HEK293 (cell line): ENCODE measurements at regions of chr7 and their contacts with region 1.

Region 1: DNA sequence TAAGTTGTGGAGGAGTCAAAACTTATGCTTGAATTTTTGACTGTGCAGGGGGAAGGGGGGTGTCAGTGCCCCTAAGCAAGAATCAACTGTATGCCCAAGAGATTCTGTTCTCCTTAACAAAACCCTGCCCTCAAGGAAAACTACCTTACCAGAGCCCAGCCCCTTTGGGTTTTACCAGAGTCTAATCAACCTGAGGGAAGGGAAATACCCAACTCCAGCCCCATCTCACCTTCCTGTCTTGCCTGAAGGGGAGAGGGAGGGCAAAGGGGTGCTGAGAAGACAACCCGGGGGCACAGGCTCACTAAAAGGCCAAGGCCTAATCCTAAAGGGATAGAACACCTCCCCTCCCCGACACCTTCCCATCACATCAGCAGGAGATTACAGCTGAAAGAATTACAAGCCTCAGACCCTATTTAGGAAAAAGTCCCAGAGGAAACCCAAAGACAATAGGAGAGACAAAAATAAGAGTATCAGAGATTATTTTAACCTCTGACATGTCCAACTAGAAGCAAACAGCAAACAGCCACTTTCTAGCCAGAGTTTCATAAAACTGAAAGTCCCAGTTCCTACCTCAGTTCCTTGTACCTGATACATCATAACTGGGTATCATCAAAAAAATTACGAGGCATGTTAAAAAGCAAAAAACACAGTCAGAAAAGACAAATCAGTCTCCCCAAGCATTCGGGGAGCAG is 26.8 kb upstream of the C7orf33 start:
- H3K4me3 ChIP-seq: no peak overlapping the region
- H3K27ac ChIP-seq: no peak overlapping the region
- H3K4me1 ChIP-seq: no peaks in the 10 kb centered on the region
- CTCF ChIP-seq: no peak

Region 2: GRCh38 chr7:148255333-148255732 is 308.4 kb before region 1 on chr7:
- CTCF ChIA-PET with region 1: no interaction called
- POLR2A ChIA-PET with region 1: no interaction called
- H3K4me3 ChIP-seq: no peak overlapping the region
- H3K27ac ChIP-seq: no peak overlapping the region
- H3K4me1 ChIP-seq: no peaks in the 10 kb centered on the region
- CTCF ChIP-seq: no peak; the same call in 1 of the 2 replicates

Region 3: DNA sequence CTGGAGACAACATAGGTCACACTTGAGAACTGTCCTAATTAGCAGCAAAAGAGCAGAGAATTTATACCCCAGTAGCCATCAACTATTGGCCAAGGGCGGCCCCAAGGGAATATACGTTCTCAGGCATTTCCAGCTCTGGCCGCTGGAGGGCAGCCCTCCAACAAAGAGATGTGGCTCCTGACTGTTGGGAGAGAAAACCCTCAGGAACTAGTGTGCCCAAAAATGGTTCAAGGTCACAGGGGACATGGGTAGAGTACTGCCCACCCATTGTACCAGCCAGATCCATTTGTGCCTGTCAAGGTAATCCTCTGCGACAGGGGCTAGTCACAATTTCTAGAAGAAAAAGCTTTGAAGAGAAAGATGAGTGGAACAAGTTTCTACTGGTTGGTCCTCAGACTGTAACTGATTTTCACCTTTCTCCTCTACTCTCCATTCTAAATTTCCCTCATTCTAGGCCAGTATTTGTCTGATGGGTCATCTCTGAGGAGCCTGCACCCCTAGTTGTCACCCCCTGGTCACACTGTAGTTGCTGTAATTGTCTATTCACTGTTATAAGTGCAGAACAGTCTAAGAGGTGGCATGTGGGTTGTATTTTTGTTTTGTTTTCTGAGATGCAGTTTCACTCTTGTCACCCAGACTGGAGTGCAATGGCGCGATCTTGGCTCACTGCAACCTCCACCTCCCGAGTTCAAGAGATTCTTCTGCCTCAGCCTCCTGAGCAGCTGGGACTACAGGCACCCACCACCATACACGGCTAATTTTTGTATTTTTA is 12.1 kb after region 1 on chr7:
- CTCF ChIA-PET with region 1: interaction called, 14 read pairs
- POLR2A ChIA-PET with region 1: no interaction called
- H3K4me3 ChIP-seq: no peak overlapping the region
- H3K27ac ChIP-seq: no peak overlapping the region
- H3K4me1 ChIP-seq: no peaks in the 10 kb centered on the region
- CTCF ChIP-seq: peak; percentile 44; the same call in 1 of the 2 replicates